PC-9 (cell line): ENCODE measurements at regions of chr10 and their contacts with region 1.

Region 1: GRCh38 chr10:124953421-124953820 is 11.5 kb downstream of the ZRANB1 start:
- DNase-seq: no peak
- H3K4me3 ChIP-seq: no peak overlapping the region
- H3K27ac ChIP-seq: no peak overlapping the region
- H3K4me1 ChIP-seq: peaks cover 6% of the 10 kb centered on the region; the same call in 1 of the 2 replicates
- H3K27me3 ChIP-seq: no peaks in the 10 kb centered on the region
- CTCF ChIP-seq: no peak

Region 2: GRCh38 chr10:124791378-124792348 is 161.8 kb before region 1 on chr10 and contains the start of gene EEF1AKMT2:
- CTCF ChIA-PET with region 1: no interaction called
- POLR2A ChIA-PET with region 1: interaction called, 14 read pairs
- intact Hi-C with region 1: no loop called
- DNase-seq: peak; percentile 60 to 79
- H3K4me3 ChIP-seq: peak within 1 kb of the TSS; percentile 89
- H3K27ac ChIP-seq: peak within 1 kb of the TSS; percentile 47
- H3K4me1 ChIP-seq: peaks cover 6% of the 10 kb centered on the region; the same call in 1 of the 2 replicates
- H3K27me3 ChIP-seq: no peaks in the 10 kb centered on the region
- CTCF ChIP-seq: peak; percentile 39; the same call in 1 of the 2 replicates
- total RNA-seq, gene EEF1AKMT2: 16.4 and 18.4 TPM in 2 replicates